Pancreas (tissue), 10 donors: ENCODE measurements at regions of chr2 and their contacts with region 1.

Region 1: DNA sequence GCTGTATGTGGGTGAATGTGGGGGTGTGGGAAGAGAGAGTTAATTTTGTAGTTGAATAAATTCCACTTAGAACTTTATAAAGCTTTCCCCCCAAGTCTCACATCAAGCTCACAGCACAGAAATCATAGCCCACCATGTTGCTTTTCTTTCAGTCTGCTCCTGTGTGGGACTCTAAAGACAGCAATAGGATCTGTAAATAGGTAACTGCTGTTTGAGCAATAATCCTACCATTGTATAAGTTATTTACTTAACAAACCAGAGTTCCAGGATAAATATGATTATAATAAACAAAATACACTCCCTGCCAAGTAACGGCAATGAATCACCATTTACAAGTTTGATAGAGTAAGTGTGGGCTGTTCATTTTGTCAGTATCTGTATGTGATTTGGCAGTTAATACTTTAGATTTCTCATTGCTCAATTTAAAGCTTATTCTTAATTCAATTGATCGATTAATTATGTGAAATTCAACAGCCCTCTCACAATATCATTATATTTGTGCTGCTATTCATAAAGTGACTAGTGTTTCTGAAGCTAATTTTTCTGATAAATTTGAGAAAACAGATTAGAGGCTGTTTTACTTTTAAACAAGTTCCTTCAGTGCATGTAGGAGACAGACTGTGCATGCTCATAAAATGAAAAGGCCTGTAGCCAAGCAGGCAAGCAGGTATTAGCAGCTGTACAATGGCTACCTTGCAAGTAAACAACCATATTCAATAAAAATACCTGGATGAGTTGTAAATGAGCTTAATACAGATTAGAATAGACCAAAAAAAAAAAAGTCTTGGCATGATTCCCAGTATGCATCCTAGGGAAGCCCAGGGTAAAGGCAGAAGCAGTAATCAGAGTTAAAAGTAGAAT is 142.7 kb downstream of the PDE11A start:
- DNase-seq: no peak
- ATAC-seq: no peak
- H3K4me3 ChIP-seq: no peak overlapping the region
- H3K27ac ChIP-seq: no peak overlapping the region
- H3K4me1 ChIP-seq: no peaks in the 10 kb centered on the region
- H3K27me3 ChIP-seq: no peaks in the 10 kb centered on the region
- CTCF ChIP-seq: no peak

Region 2: GRCh38 chr2:177397481-177398289 is 532.2 kb before region 1 on chr2:
- intact Hi-C with region 1: no loop called
- DNase-seq: peak in 3 of 6 donors; percentile 20 to 31 (median 24)
- ATAC-seq: peak; percentile 30 to 66 (median 52)
- H3K4me3 ChIP-seq: no peak overlapping the region
- H3K27ac ChIP-seq: peak overlapping the region in 2 of 4 donors; percentile 40 to 75
- H3K4me1 ChIP-seq: peaks cover 25 to 54% (median 26%) of the 10 kb centered on the region in 3 donors
- H3K27me3 ChIP-seq: no peaks in the 10 kb centered on the region
- CTCF ChIP-seq: no peak

Region 3: DNA sequence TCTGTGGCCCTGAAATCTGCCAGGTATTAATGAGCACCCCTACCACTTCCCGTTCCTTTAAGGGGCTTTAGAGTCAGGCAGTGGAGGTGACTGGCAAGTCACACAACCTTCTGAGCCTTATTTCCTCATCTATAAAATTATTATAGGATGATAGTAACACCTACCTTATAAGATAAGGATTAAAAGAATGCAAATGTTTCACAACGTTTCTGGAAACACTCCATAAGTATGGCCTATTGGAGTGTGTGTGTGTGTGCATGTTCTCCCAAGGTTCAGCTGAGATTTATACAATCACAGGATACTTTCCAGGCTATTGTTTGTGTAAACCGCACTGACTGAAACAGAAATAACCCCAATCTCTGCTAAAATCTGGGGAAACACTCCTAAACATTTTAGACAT is 33.3 kb before region 1 on chr2:
- intact Hi-C with region 1: loop called in 1 of 3 experiments (anchors 2 kb)
- DNase-seq: no peak
- ATAC-seq: no peak
- H3K4me3 ChIP-seq: no peak overlapping the region
- H3K27ac ChIP-seq: no peak overlapping the region
- H3K4me1 ChIP-seq: no peaks in the 10 kb centered on the region
- H3K27me3 ChIP-seq: no peaks in the 10 kb centered on the region
- CTCF ChIP-seq: no peak